ENCODE measurements at regions of chr10 and their contacts with region 1.

Region 1: DNA sequence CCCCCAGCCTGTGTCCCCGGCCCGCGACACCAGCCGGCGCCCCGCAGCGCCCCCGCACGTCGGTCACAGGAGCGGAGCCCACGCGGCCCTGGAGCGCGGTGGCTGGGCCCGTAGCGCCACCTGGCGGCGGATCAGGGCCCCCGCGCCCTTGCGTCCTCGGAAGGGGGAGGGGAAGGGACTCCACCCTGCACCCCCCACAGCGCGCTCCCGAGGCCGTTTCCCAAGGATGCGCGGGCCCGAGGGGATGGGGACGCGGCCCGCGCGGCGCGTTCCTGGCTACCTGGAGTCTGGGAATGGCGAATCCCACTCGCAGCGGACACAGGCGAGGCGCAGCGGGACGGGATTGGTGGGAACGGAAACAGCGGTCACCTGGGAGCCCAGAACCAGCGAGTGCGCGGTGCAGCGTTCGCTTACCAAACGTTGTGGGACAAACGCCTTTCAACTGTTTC is 23.8 kb upstream of the MKI67 start:
- DNase-seq: peak; percentile 77
- ATAC-seq: peak; percentile 93
- H3K4me3 Mint-ChIP-seq: peak overlapping the region; percentile 65
- H3K27ac Mint-ChIP-seq: no peak overlapping the region
- H3K4me1 Mint-ChIP-seq: peaks cover 24% of the 10 kb centered on the region
- H3K27me3 Mint-ChIP-seq: no peaks in the 10 kb centered on the region
- CTCF ChIP-seq: peak; percentile 87

Region 2: GRCh38 chr10:127983344-127984100 is 166.5 kb before region 1 on chr10:
- CTCF ChIA-PET with region 1: no interaction called
- POLR2A ChIA-PET with region 1: no interaction called
- intact Hi-C with region 1: no loop called
- DNase-seq: no peak
- ATAC-seq: no peak
- H3K4me3 Mint-ChIP-seq: no peak overlapping the region
- H3K27ac Mint-ChIP-seq: no peak overlapping the region
- H3K4me1 Mint-ChIP-seq: peaks cover 14% of the 10 kb centered on the region
- H3K27me3 Mint-ChIP-seq: peaks cover 8% of the 10 kb centered on the region
- CTCF ChIP-seq: no peak

Region 3: GRCh38 chr10:128078136-128078969 is 71.7 kb before region 1 on chr10:
- CTCF ChIA-PET with region 1: interaction called, 10 read pairs
- POLR2A ChIA-PET with region 1: interaction called, 6 read pairs
- intact Hi-C with region 1: loop called (anchors 5 kb)
- DNase-seq: peak; percentile 57
- ATAC-seq: peak; percentile 75
- H3K4me3 Mint-ChIP-seq: no peak overlapping the region
- H3K27ac Mint-ChIP-seq: no peak overlapping the region
- H3K4me1 Mint-ChIP-seq: no peaks in the 10 kb centered on the region
- H3K27me3 Mint-ChIP-seq: no peaks in the 10 kb centered on the region
- CTCF ChIP-seq: peak; percentile 78

Region 4: DNA sequence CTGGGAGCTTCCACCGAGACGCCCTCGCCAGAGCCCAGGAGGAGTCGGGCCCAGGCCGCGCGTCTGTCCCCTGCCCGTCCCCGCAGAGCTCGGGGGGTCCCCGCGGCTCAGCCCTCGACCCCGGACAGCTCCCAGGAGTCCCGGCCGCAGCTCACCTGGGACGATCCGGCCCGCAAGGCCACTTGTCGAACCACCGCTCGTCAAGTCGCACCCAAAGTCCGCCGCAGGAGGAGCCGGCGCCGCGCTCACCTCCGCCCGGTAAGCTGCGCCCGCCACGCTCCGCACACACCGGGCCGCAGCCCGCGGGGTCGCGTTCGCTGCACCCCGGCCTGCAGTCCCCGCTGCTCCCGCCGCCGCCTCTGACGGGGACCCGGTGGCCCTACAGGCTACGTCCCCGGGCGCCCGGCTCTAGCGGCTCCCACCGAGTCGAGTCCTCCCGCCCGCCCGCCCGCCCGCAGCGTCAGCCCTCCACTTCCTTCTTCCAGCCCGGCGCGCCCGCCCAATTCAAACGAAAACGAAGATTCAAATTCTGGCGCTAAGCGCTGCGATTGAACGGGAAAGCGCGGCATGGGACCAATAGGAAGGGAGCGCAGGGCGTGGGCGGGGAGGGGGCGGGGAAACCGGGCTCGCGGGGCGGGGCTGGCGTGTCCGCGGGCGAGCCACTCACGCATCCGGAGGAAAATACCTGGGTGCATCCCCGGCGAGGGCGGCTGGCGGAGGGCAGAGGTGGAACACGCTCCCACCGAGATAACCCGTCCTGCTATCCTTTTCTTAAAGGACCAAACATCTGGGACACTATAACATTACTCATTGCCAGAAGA is 23.9 kb before region 1 on chr10 and contains the start of gene MKI67:
- CTCF ChIA-PET with region 1: interaction called, 14 read pairs
- POLR2A ChIA-PET with region 1: interaction called, 13 read pairs
- intact Hi-C with region 1: no loop called
- DNase-seq: peak; percentile 96
- ATAC-seq: peak; percentile 91
- H3K4me3 Mint-ChIP-seq: peak within 1 kb of the TSS; percentile 96
- H3K27ac Mint-ChIP-seq: peak within 1 kb of the TSS; percentile 90
- H3K4me1 Mint-ChIP-seq: peaks cover 28% of the 10 kb centered on the region
- H3K27me3 Mint-ChIP-seq: peaks cover 30% of the 10 kb centered on the region
- CTCF ChIP-seq: no peak
- total RNA-seq, gene MKI67: 205 to 230 TPM

Measured in activated CD8-positive, alpha-beta T cell treated with anti-CD3 and anti-CD28 coated beads for 36 hours (primary cell).